Right cardiac atrium (tissue), 5 donors: ENCODE measurements at regions of chr17 and their contacts with region 1.

Region 1: DNA sequence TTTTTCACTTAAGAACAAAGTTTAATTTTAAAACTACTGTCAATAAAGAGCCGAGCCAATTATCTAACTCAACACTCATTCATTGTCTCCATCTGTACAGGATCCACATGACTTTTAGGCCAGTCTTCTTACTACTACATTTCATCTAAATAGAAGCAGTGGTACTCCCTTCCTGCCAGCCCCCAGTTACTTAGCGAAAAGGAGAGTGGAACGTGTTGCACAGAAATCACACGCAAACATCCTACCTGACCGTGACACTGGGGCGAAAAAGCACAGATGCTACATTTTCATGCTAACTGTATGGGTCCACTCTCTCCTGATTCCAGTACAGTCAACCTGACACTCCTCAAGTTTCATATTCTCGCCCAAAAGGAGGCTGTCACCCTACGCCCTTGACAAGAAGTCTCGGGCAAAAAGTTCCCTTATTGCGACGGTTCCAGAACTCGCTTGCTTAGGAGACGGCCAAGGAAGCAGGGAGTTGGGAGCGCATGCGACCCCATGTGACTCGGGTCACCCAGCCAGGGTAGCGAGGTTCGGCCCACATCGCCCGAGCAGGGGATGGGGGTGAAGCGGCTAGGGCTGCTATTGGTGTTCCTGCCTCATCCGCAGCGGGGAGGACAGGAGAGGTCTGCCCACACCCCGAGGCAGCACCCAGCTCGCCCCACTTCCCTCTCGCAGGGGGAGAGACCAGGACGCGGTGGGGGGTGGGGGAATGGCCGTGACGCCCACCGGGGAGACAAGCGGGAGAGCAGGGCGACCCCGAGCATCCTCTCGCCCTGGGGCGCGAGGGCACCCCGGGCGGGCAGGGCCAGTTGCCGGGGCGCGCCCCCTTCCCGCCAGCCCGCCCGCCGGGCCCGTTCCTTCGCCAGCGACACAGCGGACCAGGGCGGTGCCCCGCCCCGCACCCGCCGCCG is 935 bp downstream of the GNA13 start:
- DNase-seq: peak; percentile 68 to 88 (median 87)
- ATAC-seq: peak; percentile 59 to 61
- H3K4me3 ChIP-seq: peak overlapping the region; percentile 93
- H3K27ac ChIP-seq: peak overlapping the region; percentile 59
- H3K4me1 ChIP-seq: no peaks in the 10 kb centered on the region
- H3K27me3 ChIP-seq: no peaks in the 10 kb centered on the region

Region 2: GRCh38 chr17:64975329-64976087 is 80.1 kb before region 1 on chr17:
- intact Hi-C with region 1: loop called in 3 of 4 experiments (anchors 5 to 10 kb)
- DNase-seq: peak; percentile 95 to 99 (median 98)
- ATAC-seq: peak; percentile 98
- H3K4me3 ChIP-seq: peak overlapping the region; percentile 59
- H3K27ac ChIP-seq: peak overlapping the region; percentile 95
- H3K4me1 ChIP-seq: peaks cover 4% of the 10 kb centered on the region
- H3K27me3 ChIP-seq: no peaks in the 10 kb centered on the region

Region 3: DNA sequence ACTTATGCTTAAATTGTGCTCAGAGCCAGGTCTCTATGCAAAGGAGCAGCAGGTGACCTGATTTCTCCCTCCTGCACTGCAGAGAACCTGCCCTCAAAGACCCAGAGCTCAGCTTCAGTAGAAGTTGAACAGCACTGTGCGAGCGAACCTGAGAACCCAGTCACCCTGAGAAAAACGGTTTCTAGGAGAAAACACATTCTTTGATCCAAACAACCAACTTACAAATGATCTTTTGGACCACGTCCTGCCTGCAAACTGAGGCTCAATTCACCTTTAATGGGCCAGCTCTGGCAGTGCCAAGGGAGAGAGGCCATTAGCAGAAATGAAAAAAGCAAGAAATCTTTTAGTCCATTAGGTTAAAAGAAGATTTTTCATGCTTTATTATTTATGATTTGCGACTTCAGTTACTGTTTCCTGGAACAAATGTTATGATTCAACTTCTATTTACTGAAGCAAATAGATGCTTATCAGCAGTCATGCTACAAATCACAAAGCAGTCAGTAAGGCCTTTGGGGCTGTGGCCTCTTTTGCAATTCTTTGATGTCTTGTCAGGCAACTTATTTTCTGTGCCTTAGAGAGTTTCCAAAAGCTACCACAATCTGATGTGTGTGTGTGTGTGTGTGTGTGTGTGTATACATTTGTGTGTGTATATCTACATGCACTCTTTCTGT is 70.6 kb before region 1 on chr17:
- intact Hi-C with region 1: loop called in 1 of 4 experiments (anchors 10 kb)
- DNase-seq: no peak
- ATAC-seq: no peak
- H3K4me3 ChIP-seq: no peak overlapping the region
- H3K27ac ChIP-seq: no peak overlapping the region
- H3K4me1 ChIP-seq: no peaks in the 10 kb centered on the region
- H3K27me3 ChIP-seq: no peaks in the 10 kb centered on the region